GM10248 (cell line): ENCODE measurements at regions of chr7 and their contacts with region 1.

Region 1: DNA sequence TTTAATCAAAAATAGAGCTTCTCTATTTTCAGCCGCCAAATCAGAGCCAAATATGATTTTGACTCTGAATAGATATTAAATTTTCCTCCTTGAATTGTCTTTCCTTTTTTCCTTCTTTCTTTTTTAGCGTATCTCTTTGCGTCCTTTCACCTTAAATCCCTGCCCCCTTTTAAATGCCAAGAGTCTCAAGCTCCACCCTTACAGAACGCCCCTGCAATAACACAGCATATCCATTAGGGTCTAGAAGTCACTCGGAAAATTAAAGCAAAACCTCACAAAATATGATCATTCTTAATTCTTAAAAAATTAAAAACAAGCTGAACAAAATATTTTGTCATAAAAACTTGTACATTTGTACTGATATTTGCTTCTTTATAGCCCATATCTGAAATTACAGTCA is 51.3 kb upstream of the GRM8 start:
- DNase-seq: no peak
- CTCF ChIP-seq: no peak

Region 2: DNA sequence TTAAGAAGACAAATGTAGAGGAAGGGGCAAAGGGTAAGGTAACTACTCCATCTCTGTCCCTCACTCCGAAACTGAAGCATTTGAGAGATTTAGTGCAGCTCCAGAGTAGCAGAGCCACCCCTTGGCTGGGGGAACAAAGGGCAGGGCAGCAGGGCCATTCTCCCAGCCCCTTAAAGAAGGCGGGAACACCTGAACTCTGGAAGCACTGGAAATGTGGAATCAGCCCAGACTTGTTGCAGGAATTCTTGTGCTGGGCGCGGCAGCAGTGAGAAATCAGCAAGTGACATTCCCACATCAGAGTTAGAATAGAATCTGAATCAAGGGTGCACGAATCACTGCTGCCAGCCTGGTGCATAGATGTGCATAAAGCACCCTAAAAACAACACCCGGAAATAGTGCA is 17.0 kb before region 1 on chr7:
- CTCF ChIA-PET with region 1: interaction called, 10 read pairs
- POLR2A ChIA-PET with region 1: no interaction called
- DNase-seq: no peak
- CTCF ChIP-seq: no peak